GM23248 (cell line): ENCODE measurements at regions of chr1 and their contacts with region 1.

Region 1: GRCh38 chr1:239413916-239414315 is 27.5 kb downstream of the CHRM3 start:
- DNase-seq: no peak
- H3K4me3 ChIP-seq: no peak overlapping the region
- H3K27ac ChIP-seq: no peak overlapping the region
- H3K4me1 ChIP-seq: no peaks in the 10 kb centered on the region
- H3K27me3 ChIP-seq: no peaks in the 10 kb centered on the region

Region 2: DNA sequence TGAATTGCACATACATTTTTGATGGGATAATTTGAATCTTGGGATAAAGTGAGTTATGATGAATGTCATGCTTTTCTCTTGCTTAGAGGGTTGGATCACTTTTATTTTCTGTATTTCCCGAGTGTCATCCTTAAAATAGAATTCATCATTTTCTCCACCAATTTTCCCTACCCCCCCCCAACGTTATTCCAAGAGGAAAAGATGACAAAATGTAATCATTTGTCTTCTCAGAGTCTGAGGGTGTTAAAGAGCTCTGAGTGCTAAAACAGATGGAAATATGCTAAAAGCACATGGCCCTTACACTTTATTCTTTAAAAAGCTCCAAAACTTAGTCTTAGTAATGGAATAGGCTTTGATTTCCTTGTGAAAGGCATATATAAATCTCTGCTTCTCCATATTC is 53.8 kb after region 1 on chr1:
- in situ Hi-C with region 1: no loop called
- DNase-seq: no peak
- H3K4me3 ChIP-seq: no peak overlapping the region
- H3K27ac ChIP-seq: no peak overlapping the region
- H3K4me1 ChIP-seq: no peaks in the 10 kb centered on the region
- H3K27me3 ChIP-seq: no peaks in the 10 kb centered on the region

Region 3: GRCh38 chr1:239909898-239910297 is 496.0 kb after region 1 on chr1:
- in situ Hi-C with region 1: loop called (anchors 10 kb)
- DNase-seq: peak; percentile 80
- H3K4me3 ChIP-seq: no peak overlapping the region
- H3K27ac ChIP-seq: 0 out of 2 replicates have a peak overlapping the region, but pooled peaks have one; percentile 9
- H3K4me1 ChIP-seq: peaks cover 17% of the 10 kb centered on the region
- H3K27me3 ChIP-seq: 0 out of 2 replicates have a peak, but pooled peaks cover 6% of the 10 kb centered on the region